Colonic mucosa (tissue), 4 donors: ENCODE measurements at regions of chr11 and their contacts with region 1.

Region 1: DNA sequence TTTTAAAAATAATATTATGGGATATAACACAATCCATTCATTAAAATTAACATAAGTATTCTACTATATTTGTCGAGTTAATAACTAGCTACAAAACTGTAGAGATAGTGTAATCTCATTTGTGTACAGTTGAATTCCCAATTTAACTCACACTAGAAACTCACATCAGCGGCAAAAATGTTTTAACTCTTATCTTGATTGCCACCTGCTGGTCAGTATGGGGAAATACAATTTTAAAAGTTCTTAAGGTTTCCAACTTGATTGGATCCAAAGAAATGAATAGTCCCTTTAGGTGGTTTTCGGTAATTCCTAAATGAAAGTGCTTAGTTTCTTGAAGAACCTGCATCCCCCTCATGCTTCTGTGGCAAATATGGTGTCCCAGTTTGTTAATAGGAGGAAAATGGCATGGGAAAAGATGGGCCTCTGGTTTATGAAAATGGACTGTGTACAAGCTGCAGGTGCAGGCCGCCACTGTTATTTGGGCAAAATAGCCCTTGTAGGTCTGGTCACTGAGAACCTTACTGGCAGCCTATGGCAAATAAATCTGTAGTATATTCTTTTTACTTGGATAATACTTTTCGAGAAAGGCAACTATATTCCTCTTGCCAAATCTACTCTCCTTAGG is 33.7 kb upstream of the SLC17A6 start:
- DNase-seq: no peak
- H3K4me3 ChIP-seq: no peak overlapping the region
- H3K27ac ChIP-seq: no peak overlapping the region
- H3K4me1 ChIP-seq: no peaks in the 10 kb centered on the region
- H3K27me3 ChIP-seq: no peaks in the 10 kb centered on the region
- CTCF ChIP-seq: peak; percentile 67

Region 2: GRCh38 chr11:20647976-20648565 is 1656.4 kb before region 1 on chr11:
- intact Hi-C with region 1: loop called (anchors 10 kb)
- DNase-seq: peak; percentile 56
- H3K4me3 ChIP-seq: no peak overlapping the region
- H3K27ac ChIP-seq: no peak overlapping the region
- H3K4me1 ChIP-seq: no peaks in the 10 kb centered on the region
- H3K27me3 ChIP-seq: no peaks in the 10 kb centered on the region
- CTCF ChIP-seq: peak; percentile 89

Region 3: DNA sequence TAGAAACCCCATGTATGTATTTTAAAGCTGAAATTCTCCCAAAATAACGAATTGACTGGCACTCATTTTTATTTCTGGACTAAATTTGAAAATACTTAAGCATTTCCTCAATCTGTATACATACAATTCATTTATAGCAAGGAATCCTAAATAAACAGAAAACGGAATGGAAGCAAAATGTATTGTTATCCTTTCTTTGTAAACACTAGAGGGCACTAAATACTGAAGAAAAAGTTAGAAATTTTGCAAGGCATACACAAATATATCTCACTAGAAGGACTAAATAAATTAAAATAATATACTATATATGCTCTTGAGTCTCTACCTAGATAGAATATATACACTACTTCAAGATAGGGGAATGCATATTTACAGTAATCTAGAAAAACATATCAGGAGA is 134.6 kb before region 1 on chr11:
- intact Hi-C with region 1: loop called (anchors 5 kb)
- DNase-seq: no peak
- H3K4me3 ChIP-seq: no peak overlapping the region
- H3K27ac ChIP-seq: no peak overlapping the region
- H3K4me1 ChIP-seq: no peaks in the 10 kb centered on the region
- H3K27me3 ChIP-seq: no peaks in the 10 kb centered on the region
- CTCF ChIP-seq: peak; percentile 14

Region 4: GRCh38 chr11:22244986-22245592 is 59.4 kb before region 1 on chr11:
- intact Hi-C with region 1: loop called (anchors 5 kb)
- DNase-seq: no peak
- H3K4me3 ChIP-seq: no peak overlapping the region
- H3K27ac ChIP-seq: no peak overlapping the region
- H3K4me1 ChIP-seq: no peaks in the 10 kb centered on the region
- H3K27me3 ChIP-seq: no peaks in the 10 kb centered on the region
- CTCF ChIP-seq: peak; percentile 36